CD8-positive, alpha-beta T cell (primary cell): ENCODE measurements at regions of chr1 and their contacts with region 1.

Region 1: GRCh38 chr1:13675151-13675651 is 24.8 kb upstream of the PRDM2 start:
- DNase-seq: no peak
- ATAC-seq: no peak
- H3K4me3 ChIP-seq: no peak overlapping the region
- H3K4me3 Mint-ChIP-seq: no peak overlapping the region
- H3K27ac ChIP-seq: no peak overlapping the region
- H3K27ac Mint-ChIP-seq: no peak overlapping the region
- H3K4me1 ChIP-seq: no peaks in the 10 kb centered on the region
- H3K4me1 Mint-ChIP-seq: no peaks in the 10 kb centered on the region
- H3K27me3 ChIP-seq: no peaks in the 10 kb centered on the region
- H3K27me3 Mint-ChIP-seq: peaks cover 17% of the 10 kb centered on the region
- CTCF ChIP-seq: no peak

Region 2: GRCh38 chr1:13792419-13792818 is 117.2 kb after region 1 on chr1:
- CTCF ChIA-PET with region 1: no interaction called
- POLR2A ChIA-PET with region 1: no interaction called
- intact Hi-C with region 1: loop called in 1 of 2 experiments (anchors 5 kb)
- DNase-seq: no peak
- ATAC-seq: no peak
- H3K4me3 ChIP-seq: no peak overlapping the region
- H3K4me3 Mint-ChIP-seq: no peak overlapping the region
- H3K27ac ChIP-seq: no peak overlapping the region
- H3K27ac Mint-ChIP-seq: no peak overlapping the region
- H3K4me1 ChIP-seq: peaks cover 27% of the 10 kb centered on the region
- H3K4me1 Mint-ChIP-seq: peaks cover 67% of the 10 kb centered on the region
- H3K27me3 ChIP-seq: no peaks in the 10 kb centered on the region
- H3K27me3 Mint-ChIP-seq: no peaks in the 10 kb centered on the region
- CTCF ChIP-seq: no peak

Region 3: DNA sequence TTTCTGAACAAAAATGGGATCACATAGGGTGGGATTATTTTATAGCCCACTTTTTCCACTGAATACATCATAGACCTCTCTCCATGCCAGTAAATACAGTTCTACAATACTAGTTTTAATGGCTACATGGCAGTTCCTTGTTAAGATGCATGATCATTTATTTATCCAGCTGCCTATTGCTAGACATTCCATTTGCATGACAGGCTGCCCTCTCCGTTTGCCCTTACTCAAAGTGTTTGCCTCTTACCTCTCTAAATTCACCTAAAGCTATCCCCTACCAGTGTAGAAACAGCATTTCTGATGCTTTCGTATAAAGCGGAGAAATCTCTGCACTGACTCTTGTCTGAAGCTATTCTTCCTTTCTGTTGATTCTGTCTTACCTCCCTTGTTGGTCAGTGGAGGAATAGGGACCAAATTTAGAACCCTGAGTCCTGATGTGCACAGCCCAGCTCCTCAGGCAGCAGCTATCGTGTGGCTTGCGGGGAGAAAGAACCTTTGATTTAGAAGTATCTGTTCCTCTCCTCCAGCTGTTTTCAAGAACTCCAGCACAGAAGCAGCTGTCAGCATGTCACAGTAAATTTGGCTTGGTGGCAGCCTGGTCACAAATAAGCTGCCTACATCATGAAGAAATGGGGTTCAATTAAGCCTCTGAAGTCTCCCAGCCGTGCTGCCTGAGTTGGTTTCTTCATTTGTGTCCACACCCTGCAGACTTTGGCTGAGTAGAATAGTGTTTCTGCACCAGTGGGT is 362.1 kb after region 1 on chr1:
- CTCF ChIA-PET with region 1: no interaction called
- POLR2A ChIA-PET with region 1: no interaction called
- intact Hi-C with region 1: no loop called
- DNase-seq: no peak
- ATAC-seq: no peak
- H3K4me3 ChIP-seq: no peak overlapping the region
- H3K4me3 Mint-ChIP-seq: no peak overlapping the region
- H3K27ac ChIP-seq: no peak overlapping the region
- H3K27ac Mint-ChIP-seq: no peak overlapping the region
- H3K4me1 ChIP-seq: no peaks in the 10 kb centered on the region
- H3K4me1 Mint-ChIP-seq: no peaks in the 10 kb centered on the region
- H3K27me3 ChIP-seq: no peaks in the 10 kb centered on the region
- H3K27me3 Mint-ChIP-seq: peaks cover 12% of the 10 kb centered on the region
- CTCF ChIP-seq: no peak